ENCODE measurements at regions of chr7 and their contacts with region 1.

Region 1: GRCh38 chr7:2567679-2568278 is 9.0 kb downstream of the IQCE start:
- DNase-seq: peak; percentile 33
- H3K4me3 ChIP-seq: no peak overlapping the region
- CTCF ChIP-seq: peak; percentile 78

Region 2: GRCh38 chr7:2471396-2471795 is 96.4 kb before region 1 on chr7:
- in situ Hi-C with region 1: no loop called
- DNase-seq: no peak
- H3K4me3 ChIP-seq: no peak overlapping the region
- CTCF ChIP-seq: no peak

Region 3: GRCh38 chr7:2482725-2483451 is 84.9 kb before region 1 on chr7:
- in situ Hi-C with region 1: loop called (anchors 5 kb)
- DNase-seq: no peak
- H3K4me3 ChIP-seq: no peak overlapping the region
- CTCF ChIP-seq: no peak

Region 4: GRCh38 chr7:2602406-2603043 is 34.7 kb after region 1 on chr7:
- in situ Hi-C with region 1: no loop called
- DNase-seq: no peak
- H3K4me3 ChIP-seq: no peak overlapping the region
- CTCF ChIP-seq: no peak

Region 5: DNA sequence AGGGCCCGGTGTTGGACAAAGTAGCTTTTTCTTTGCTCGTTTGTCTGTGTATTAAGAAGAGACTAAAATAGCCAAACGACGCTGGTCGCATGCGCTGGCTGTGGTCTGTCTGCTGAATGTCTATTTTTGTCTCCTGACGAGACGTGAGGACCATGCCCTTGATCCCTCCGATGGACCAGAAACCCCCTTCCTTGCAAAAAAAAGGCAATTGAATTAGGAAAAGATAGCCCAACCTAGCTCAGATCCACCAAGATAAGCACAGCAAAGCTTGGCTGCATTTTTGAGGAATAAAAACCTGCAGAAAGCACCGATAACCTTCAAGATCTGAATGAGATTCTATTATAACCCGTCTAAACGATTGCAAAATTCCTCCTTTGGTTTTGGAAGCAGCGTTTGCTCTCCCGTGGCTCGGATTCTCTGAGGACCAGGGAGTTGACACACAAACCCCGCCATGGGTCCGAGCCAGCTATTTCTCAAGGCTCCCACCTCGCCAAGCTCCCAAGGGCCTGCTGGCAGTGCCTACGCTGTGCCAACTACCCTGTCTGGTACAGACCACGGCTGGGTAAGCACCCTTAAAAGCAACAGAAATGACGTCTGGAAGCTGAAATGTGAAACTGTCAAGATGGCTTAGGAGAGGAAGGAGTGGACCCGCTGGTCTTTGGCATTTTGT is 46.3 kb after region 1 on chr7:
- in situ Hi-C with region 1: loop called (anchors 5 kb)
- DNase-seq: no peak
- H3K4me3 ChIP-seq: no peak overlapping the region
- CTCF ChIP-seq: no peak